ENCODE measurements at regions of chr7 and their contacts with region 1.

Region 1: DNA sequence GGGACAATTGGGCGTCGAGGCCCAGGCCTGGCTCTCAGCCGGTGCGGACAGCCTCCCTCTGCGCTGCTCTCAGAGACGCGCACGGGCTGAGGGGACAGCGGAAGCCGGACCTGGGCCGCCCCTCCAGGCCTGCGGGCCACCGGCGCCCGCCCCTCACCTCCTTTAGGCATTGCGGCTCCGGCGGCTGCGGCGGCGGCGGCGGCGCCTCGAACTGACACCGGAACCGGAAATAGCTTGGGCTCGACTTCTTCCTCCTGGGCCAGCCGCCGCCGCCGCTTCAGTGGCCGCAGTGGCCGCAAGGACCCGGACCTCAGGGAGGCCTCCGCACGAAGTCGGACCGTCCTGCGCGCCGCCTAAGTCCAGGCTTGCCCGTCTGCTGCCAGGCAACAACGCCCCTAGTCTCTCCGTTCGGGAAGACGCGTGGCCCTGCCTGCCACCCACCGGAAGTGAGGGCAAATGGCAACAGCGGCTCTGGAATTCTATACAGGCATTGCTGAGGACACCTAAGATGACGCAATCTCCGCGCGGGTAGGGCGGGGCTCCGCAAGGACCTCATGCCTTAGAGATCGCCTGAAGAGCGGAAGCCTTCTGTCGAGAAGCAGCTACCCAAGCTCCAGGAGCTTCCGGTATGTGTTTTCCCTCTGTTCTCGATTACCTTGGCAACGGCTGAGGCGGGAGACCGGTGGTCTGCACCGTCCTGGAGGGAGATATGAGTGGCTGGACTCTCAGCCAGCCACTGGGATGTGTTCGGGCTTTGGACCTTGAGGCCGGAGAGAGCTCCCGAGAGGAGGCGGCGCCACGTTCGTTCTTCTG is at the starts of genes BUD31 and PDAP1:
- DNase-seq: peak; percentile 95
- ATAC-seq: peak; percentile 84
- H3K4me3 Mint-ChIP-seq: peak within 1 kb of the TSS; percentile 98
- H3K27ac Mint-ChIP-seq: peak within 1 kb of the TSS; percentile 99
- H3K4me1 Mint-ChIP-seq: peaks cover 49% of the 10 kb centered on the region
- H3K27me3 Mint-ChIP-seq: no peaks in the 10 kb centered on the region
- total RNA-seq, gene BUD31: 101 to 110 TPM
- total RNA-seq, gene PDAP1: 104 TPM

Region 2: DNA sequence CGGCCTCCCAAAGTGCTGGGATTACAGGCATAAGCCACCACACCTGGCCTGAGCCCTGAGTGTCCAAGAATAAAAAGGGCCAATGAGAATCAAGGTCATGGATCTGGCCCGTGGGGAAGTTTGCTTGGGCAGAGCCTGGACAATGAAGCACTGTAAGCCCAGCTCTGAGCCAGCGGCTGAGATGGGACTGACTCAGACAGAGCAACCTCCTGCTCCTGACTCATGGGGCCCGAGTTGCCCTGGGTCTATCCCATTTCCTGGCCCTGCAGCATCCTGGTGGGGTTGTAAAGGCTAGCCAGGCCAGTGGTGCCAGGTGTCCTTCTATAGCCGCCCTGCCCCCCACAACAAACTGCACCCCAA is 141.1 kb before region 1 on chr7:
- CTCF ChIA-PET with region 1: no interaction called
- POLR2A ChIA-PET with region 1: no interaction called
- DNase-seq: no peak
- ATAC-seq: no peak
- H3K4me3 Mint-ChIP-seq: no peak overlapping the region
- H3K27ac Mint-ChIP-seq: no peak overlapping the region
- H3K4me1 Mint-ChIP-seq: peaks cover under 1% of the 10 kb centered on the region
- H3K27me3 Mint-ChIP-seq: peaks cover 4% of the 10 kb centered on the region

Region 3: GRCh38 chr7:99340659-99341058 is 67.9 kb before region 1 on chr7:
- CTCF ChIA-PET with region 1: no interaction called
- POLR2A ChIA-PET with region 1: no interaction called
- DNase-seq: no peak
- ATAC-seq: no peak
- H3K4me3 Mint-ChIP-seq: no peak overlapping the region
- H3K27ac Mint-ChIP-seq: no peak overlapping the region
- H3K4me1 Mint-ChIP-seq: no peaks in the 10 kb centered on the region
- H3K27me3 Mint-ChIP-seq: no peaks in the 10 kb centered on the region

Region 4: DNA sequence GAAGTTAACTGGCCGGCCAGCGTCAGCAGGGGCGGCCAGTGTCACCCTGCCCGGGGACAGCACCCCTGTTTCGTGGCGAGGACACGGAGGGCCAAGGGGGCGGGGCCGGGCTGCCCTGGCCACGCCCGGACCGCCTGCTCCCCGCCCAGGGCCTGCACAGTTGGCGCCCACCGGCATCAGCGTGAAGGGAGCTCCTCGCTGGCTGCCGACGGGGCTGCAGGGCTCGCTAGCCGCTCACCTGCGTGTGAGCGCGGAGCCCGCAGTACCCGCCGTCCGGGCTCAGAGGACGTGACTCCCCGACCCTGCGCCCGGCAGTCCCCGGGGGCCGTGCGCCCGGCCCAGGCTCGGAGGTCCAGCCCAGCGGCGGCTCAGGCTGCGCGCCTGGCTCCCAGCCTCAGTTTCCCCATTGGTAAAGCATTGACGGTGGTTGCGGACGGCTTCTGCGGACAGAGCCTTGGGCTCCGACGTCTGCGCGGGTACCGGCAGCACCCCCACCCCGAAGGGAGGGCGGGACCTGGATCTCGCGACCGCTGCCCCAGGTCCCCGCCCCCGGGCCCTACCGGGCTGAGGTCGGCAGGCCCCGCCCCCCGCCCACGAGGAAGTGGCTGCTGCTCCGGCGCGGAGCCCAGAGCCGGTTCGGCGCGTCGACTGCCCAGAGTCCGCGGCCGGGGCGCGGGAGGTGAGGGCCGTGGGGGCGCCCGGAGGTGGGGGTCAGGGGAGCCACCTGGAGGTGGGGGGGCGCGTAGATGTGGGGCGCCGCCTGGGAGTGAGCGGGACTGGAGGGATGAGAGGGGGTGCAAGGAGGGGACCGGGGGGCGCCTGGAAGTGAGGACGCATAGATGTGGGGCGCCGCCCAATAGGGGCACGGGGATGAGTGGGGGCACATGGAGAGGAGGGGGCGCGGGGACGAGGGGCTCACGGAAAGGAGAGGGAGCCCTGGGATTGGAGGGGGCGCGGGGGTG is 34.2 kb before region 1 on chr7 and contains the start of gene ARPC1B:
- CTCF ChIA-PET with region 1: interaction called, 4 read pairs
- POLR2A ChIA-PET with region 1: interaction called, 53 read pairs
- DNase-seq: peak; percentile 86
- ATAC-seq: peak; percentile 71
- H3K4me3 Mint-ChIP-seq: peak within 1 kb of the TSS; percentile 78
- H3K27ac Mint-ChIP-seq: peak within 1 kb of the TSS; percentile 83
- H3K4me1 Mint-ChIP-seq: peaks cover 54% of the 10 kb centered on the region
- H3K27me3 Mint-ChIP-seq: no peaks in the 10 kb centered on the region
- total RNA-seq, gene ARPC1B: 408 to 412 TPM

Region 5: GRCh38 chr7:99380032-99380822 is 28.4 kb before region 1 on chr7:
- CTCF ChIA-PET with region 1: interaction called, 4 read pairs
- POLR2A ChIA-PET with region 1: interaction called, 53 read pairs
- DNase-seq: peak; percentile 49
- ATAC-seq: peak; percentile 28
- H3K4me3 Mint-ChIP-seq: peak overlapping the region; percentile 74
- H3K27ac Mint-ChIP-seq: peak overlapping the region; percentile 93
- H3K4me1 Mint-ChIP-seq: peaks cover 71% of the 10 kb centered on the region
- H3K27me3 Mint-ChIP-seq: no peaks in the 10 kb centered on the region

Region 6: DNA sequence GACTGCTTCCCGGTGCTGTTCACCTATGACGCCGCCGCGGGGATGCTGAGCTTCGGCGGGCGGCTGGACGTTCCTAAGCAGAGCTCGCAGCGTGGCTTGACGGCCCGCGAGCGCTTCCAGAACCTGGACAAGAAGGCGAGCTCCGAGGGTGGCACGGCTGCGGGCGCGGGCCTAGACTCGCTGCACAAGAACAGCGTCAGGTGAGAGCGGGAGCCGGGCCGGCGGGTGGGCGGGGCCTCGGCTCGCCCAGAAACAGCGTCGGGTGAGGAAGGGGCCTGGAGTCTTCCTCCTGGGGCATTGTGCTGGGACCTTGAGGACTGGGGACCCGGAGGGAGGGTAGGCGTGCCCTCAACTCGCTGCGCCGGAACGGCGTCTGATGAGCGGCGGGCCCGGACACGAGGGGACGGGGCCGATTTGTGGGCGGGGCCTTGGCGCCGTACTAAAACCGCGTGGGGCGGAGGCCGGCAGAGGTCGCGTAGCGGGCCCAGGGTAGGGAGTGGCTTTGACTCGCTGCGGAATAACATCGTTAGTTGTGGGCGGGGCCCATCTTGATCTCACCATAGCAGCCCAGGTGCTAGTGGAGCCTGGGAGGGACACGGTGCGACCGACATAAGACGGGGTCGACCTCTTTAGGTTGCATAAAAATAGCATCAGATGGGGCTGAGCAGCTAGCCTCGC is 15.8 kb before region 1 on chr7:
- CTCF ChIA-PET with region 1: interaction called, 17 read pairs
- POLR2A ChIA-PET with region 1: interaction called, 23 read pairs
- DNase-seq: peak; percentile 89
- ATAC-seq: peak; percentile 96
- H3K4me3 Mint-ChIP-seq: peak overlapping the region; percentile 62
- H3K27ac Mint-ChIP-seq: peak overlapping the region; percentile 86
- H3K4me1 Mint-ChIP-seq: peaks cover 32% of the 10 kb centered on the region
- H3K27me3 Mint-ChIP-seq: no peaks in the 10 kb centered on the region

Region 7: GRCh38 chr7:99438573-99439480 is 30.2 kb after region 1 on chr7 and contains the starts of genes CPSF4 and PTCD1:
- CTCF ChIA-PET with region 1: interaction called, 3 read pairs
- POLR2A ChIA-PET with region 1: interaction called, 12 read pairs
- DNase-seq: peak; percentile 92
- ATAC-seq: peak; percentile 91
- H3K4me3 Mint-ChIP-seq: peak within 1 kb of the TSS; percentile 98
- H3K27ac Mint-ChIP-seq: peak within 1 kb of the TSS; percentile 96
- H3K4me1 Mint-ChIP-seq: peaks cover 30% of the 10 kb centered on the region
- H3K27me3 Mint-ChIP-seq: no peaks in the 10 kb centered on the region
- total RNA-seq, gene CPSF4: 64.0 to 65.8 TPM
- total RNA-seq, gene PTCD1: 10.9 to 13.4 TPM